RWPE1 (cell line): ENCODE measurements at regions of chr20 and their contacts with region 1.

Region 1: GRCh38 chr20:51306503-51307358 is 235.8 kb downstream of the NFATC2 start:
- DNase-seq: peak; percentile 95
- H3K27ac ChIP-seq: no peak overlapping the region
- CTCF ChIP-seq: peak; percentile 99

Region 2: GRCh38 chr20:50987592-50988210 is 319.0 kb before region 1 on chr20:
- CTCF ChIA-PET with region 1: interaction called, 91 read pairs
- POLR2A ChIA-PET with region 1: no interaction called
- DNase-seq: peak; percentile 87
- H3K27ac ChIP-seq: no peak overlapping the region
- CTCF ChIP-seq: peak; percentile 98

Region 3: GRCh38 chr20:51014797-51015722 is 291.7 kb before region 1 on chr20:
- CTCF ChIA-PET with region 1: interaction called, 29 read pairs
- POLR2A ChIA-PET with region 1: no interaction called
- DNase-seq: peak; percentile 91
- H3K27ac ChIP-seq: no peak overlapping the region
- CTCF ChIP-seq: peak; percentile 80